Heart left ventricle (tissue), 16 donors: ENCODE measurements at regions of chr9 and their contacts with region 1.

Region 1: DNA sequence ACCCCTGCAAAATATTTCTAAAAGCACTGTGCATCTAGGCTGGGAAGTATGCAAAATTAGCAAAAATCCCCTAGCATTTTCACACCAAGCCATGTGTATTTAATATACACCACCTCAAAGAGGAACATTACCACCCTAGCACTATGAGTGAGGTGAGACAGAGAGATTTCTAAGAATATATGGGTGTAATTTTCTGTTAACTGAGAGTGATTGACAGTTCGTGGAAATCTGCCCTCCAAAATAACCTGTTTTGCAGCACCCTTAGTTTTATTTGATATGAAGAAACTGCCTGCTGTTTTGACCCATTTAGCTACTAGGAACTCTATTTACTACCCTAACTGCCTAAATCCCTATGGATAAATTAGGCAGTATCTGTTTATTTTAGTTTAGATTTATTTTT is 64.2 kb upstream of the CDKN2B start:
- DNase-seq: no peak
- ATAC-seq: no peak
- H3K4me3 ChIP-seq: no peak overlapping the region
- H3K27ac ChIP-seq: no peak overlapping the region
- H3K4me1 ChIP-seq: no peaks in the 10 kb centered on the region
- H3K27me3 ChIP-seq: no peaks in the 10 kb centered on the region
- CTCF ChIP-seq: no peak
- POLR2A ChIP-seq: no peak

Region 2: GRCh38 chr9:21576331-21577189 is 496.8 kb before region 1 on chr9:
- intact Hi-C with region 1: no loop called
- DNase-seq: no peak
- ATAC-seq: peak in 3 of 4 donors; percentile 26 to 90 (median 48)
- H3K4me3 ChIP-seq: peak overlapping the region in 3 of 12 donors; percentile 6 to 28 (median 27)
- H3K27ac ChIP-seq: peak overlapping the region in 1 of 12 donors; percentile 21
- H3K4me1 ChIP-seq: peaks cover 0 to 7% (median 0%) of the 10 kb centered on the region in 12 donors
- H3K27me3 ChIP-seq: no peaks in the 10 kb centered on the region
- CTCF ChIP-seq: no peak
- POLR2A ChIP-seq: no peak

Region 3: GRCh38 chr9:22022396-22022795 is 51.0 kb before region 1 on chr9:
- intact Hi-C with region 1: loop called in 1 of 10 experiments (anchors 5 kb)
- DNase-seq: no peak
- ATAC-seq: no peak
- H3K4me3 ChIP-seq: no peak overlapping the region
- H3K27ac ChIP-seq: no peak overlapping the region
- H3K4me1 ChIP-seq: no peaks in the 10 kb centered on the region
- H3K27me3 ChIP-seq: no peaks in the 10 kb centered on the region
- CTCF ChIP-seq: no peak
- POLR2A ChIP-seq: no peak